Left colon (tissue), 2 donors: ENCODE measurements at regions of chr17 and their contacts with region 1.

Region 1: DNA sequence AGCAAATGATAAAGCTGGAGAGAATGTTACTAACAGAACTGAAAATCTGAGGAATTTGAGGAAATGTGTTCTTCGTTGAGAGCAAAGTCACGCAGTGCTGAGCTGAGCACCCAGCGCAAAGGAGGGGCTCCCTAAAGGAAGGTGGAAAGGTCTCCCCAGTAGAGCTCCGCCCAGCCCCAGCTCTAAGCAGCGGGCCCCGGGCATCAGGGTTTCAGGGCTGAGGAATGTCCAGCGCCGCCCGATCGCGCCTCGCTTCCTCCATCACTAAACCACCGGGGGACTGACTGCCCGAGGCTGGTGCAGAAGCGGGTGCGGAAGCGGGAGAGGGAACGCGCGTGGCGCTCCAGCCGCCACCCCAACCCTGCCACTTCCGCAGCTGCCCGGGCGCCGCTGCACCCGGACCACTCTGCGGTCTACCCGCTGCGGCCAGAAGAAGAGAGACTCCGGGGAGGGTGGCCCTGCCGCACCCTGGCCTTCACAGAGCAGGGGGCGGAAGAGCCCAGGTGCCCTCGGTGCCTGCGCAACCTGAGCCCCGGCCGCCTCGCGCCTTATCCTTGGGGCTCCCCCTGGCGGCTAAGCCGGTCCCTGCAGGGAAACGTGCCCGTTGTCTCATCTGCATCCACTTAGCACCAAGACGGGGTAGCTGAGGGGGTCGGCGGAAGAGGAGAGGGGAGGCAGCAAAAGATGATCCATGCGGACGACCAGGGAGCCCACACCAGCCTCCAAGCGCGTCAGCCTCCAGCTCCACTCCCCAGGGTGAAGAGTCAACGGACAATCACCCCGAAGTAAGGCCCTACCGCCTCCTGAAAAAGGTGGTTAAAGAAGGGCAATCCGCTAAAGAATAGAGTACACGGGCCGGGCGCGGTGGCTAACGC is 12.4 kb upstream of the GUCY2D start:
- DNase-seq: peak; percentile 66 to 93
- ATAC-seq: peak; percentile 91

Region 2: GRCh38 chr17:7862692-7863437 is 127.2 kb before region 1 on chr17:
- intact Hi-C with region 1: loop called in 1 of 2 experiments (anchors 5 kb)
- DNase-seq: peak in 1 of 2 donors; percentile 50
- ATAC-seq: no peak

Region 3: GRCh38 chr17:7912927-7913524 is 77.0 kb before region 1 on chr17:
- intact Hi-C with region 1: loop called in 1 of 2 experiments (anchors 5 kb)
- DNase-seq: peak in 1 of 2 donors; percentile 16
- ATAC-seq: peak; percentile 46

Region 4: DNA sequence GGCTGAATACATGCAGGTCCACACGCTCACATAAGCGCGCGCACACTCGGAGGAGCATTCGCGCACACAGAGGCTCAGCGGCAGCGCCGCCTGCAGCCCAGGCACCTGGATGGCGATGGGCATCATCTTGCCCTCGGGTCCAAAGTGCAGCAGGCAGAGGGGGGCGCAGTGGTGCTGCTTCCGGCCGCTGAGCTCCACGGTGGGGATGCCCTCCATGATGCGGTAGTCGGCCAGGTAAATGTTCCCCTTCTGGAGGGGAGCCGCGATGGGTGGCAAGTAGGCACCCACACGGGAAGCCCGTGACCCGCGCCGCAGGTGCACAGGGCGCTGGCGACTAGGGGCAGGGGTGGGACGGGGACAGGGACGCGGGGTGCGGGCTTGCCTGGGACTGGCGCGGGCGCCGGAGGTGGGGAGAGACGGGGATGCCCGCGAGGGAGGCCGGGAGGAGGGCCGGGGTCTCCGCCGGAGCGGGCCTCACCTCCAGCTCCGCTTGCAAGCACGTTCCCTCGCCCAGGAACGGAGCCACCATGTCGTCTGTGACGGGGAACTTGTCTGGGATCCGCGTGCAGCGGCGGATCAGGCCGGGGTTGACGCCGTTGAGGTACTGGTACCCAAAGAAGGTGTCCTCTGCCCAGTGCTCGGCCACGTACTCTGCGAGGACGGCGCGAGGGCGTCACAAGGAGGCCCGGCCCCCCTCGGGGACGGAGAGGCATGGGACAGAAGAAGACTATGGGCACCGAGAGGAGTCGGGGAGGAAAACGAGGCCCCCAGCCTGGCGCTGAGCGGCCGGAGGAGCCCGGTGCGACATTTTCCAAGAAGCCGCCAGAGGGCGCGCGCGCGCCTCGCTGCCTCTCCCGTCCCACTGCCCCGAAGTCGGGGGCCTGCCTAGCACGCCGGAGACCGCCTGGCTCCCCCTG is 89.5 kb after region 1 on chr17:
- intact Hi-C with region 1: no loop called
- DNase-seq: peak; percentile 62 to 80
- ATAC-seq: peak; percentile 84